Right lobe of liver (tissue), 6 donors: ENCODE measurements at regions of chr1 and their contacts with region 1.

Region 1: GRCh38 chr1:160997323-160998038 is 23.5 kb downstream of the F11R start:
- DNase-seq: peak; percentile 72 to 75 (median 73)
- ATAC-seq: peak; percentile 83 to 94 (median 91)
- H3K4me3 ChIP-seq: no peak overlapping the region
- H3K27ac ChIP-seq: peak overlapping the region; percentile 11 to 36 (median 13)
- H3K4me1 ChIP-seq: peaks cover 0 to 9% (median 2%) of the 10 kb centered on the region in 4 donors
- H3K27me3 ChIP-seq: no peaks in the 10 kb centered on the region
- CTCF ChIP-seq: peak; percentile 68 to 72 (median 70)
- POLR2A ChIP-seq: no peak

Region 2: DNA sequence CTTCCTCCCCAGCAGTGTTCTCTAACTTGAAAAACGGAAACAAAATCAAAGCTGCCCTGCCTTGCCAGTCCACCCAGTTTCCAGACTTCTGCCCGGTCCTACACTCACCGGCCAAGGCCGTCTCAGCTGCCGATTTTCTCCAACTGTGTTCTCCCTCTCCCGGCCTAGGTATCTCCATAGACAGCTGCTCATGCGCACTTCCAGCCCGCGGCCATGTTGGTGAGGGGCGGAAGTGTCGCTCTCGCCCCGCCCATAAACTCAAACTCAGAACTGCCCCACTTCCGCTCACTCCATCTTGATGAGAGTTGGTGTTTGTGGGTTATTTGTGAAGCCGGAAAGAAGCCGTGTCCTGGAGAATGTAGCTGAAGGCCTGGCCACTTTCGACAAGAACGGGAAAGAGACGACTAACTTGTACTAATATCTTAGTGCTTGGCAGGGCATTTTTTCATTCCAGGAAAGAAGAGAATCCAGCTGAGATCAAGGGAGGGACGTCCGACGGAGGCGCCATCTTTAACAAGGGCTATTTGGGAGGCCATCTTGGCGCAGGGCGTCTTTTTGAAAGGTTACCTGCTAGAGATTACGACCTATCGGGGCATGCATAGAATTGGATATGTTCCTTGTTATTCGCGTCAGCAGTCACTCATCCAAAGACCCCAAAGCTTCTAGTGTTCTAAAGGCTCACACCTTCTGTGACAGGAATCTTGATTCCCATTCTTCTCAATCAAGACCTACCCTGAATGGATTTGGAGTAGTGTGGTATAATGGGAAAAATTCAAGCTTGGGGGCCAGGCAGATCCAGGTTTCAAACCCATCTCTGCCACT is 48.5 kb after region 1 on chr1 and contains the start of gene USF1:
- intact Hi-C with region 1: loop called in 1 of 2 experiments (anchors 10 kb)
- DNase-seq: peak; percentile 90 to 93 (median 93)
- ATAC-seq: peak; percentile 91 to 92 (median 92)
- H3K4me3 ChIP-seq: peak within 1 kb of the TSS; percentile 83 to 94 (median 93)
- H3K27ac ChIP-seq: peak within 1 kb of the TSS; percentile 91 to 96 (median 94)
- H3K4me1 ChIP-seq: peaks cover 0 to 7% (median 4%) of the 10 kb centered on the region in 4 donors
- H3K27me3 ChIP-seq: no peaks in the 10 kb centered on the region
- CTCF ChIP-seq: peak in 1 of 4 donors; percentile 2
- POLR2A ChIP-seq: peak; percentile 68
- total RNA-seq, gene USF1: 25.5 to 34.3 (median 28.1) TPM

Region 3: GRCh38 chr1:161098210-161099068 is 101.0 kb after region 1 on chr1 and contains the start of gene KLHDC9:
- intact Hi-C with region 1: loop called in 1 of 2 experiments (anchors 5 kb)
- DNase-seq: peak; percentile 87 to 91 (median 91)
- ATAC-seq: peak; percentile 89 to 92 (median 89)
- H3K4me3 ChIP-seq: peak within 1 kb of the TSS; percentile 66 to 84 (median 71)
- H3K27ac ChIP-seq: peak within 1 kb of the TSS in 1 of 3 donors; percentile 40
- H3K4me1 ChIP-seq: peaks cover 0 to 11% (median 2%) of the 10 kb centered on the region in 4 donors
- H3K27me3 ChIP-seq: no peaks in the 10 kb centered on the region
- CTCF ChIP-seq: peak in 1 of 4 donors; percentile 18
- POLR2A ChIP-seq: no peak
- total RNA-seq, gene KLHDC9: 1.4 to 6.8 (median 2.9) TPM